ENCODE measurements at regions of chrX and their contacts with region 1.

Region 1: DNA sequence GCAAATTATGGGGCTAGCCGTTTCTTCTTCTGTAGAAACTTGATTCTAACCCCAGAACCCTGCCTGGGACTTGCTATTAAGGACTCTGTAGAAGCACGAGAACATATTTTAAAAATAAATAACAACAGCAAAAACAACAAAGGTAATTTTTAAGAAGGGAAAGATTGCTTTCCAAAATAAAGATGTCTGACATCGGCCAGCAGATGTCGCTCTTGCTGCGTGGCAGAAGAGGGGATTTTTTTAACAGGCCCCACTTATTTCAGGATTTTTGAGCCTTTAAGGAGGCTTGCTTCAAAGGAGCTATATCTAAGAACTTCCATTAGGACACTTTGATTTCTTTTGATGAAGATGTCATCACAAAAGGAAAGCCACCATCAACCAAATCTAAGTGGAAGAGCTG is 62.8 kb upstream of the EGFL6 start:
- DNase-seq: peak; percentile 62
- H3K4me3 ChIP-seq: peak overlapping the region in 1 of 2 experiments; percentile 9; a peak in 1 of 4 replicates
- H3K27ac ChIP-seq: no peak overlapping the region
- H3K4me1 ChIP-seq: no peaks in the 10 kb centered on the region
- H3K27me3 ChIP-seq: no peaks in the 10 kb centered on the region; the same call in 1 of the 2 replicates
- CTCF ChIP-seq: peak; percentile 94
- EP300 ChIP-seq: no peak
- RAD21 ChIP-seq: peak; percentile 92

Region 2: DNA sequence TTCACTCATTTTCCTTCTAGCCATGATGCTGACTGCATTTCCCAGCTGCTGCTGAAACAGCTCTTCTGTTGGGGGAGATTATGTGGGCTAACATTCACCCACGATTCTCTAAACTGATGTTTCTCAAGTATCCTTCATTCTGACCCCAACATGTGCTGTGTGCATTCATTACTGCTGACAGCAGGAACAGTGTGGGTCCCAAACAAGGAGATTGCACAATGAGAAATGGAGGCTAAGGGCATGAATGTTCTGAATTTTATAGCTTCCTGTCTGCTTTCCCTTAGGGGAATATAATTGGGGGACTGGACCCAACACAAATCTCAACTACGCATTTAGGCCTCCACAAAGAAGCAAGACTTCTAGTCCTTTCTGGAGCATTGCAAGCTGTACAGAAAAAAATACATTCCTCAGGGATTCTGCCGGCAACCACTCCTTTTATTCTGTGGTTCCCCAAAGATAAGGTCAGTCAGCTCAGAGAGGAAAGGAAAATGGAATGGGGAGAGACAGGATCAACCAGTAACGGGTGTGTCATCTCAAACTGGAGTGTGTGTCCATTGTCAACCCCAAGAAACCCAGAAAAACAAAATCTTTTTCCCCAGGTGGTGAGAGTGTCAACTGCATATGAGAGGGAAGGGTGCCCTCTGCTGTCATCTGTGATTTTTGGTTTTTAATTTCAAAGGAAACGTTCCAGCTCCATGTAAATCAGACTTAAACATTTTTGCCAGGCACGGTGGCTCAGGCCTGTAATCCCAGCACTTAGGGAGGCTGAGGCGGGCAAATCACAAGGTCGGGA is 18.6 kb before region 1 on chrX:
- CTCF ChIA-PET with region 1: interaction called, 11 read pairs
- POLR2A ChIA-PET with region 1: no interaction called
- DNase-seq: peak; percentile 48
- H3K4me3 ChIP-seq: no peak overlapping the region; a peak in 1 of 4 replicates
- H3K27ac ChIP-seq: peak overlapping the region; percentile 92 to 97
- H3K4me1 ChIP-seq: peaks cover 0 to 11% of the 10 kb centered on the region in 2 experiments; a peak in 3 of 4 replicates
- H3K27me3 ChIP-seq: no peaks in the 10 kb centered on the region
- CTCF ChIP-seq: peak; percentile 78
- EP300 ChIP-seq: peak in 1 of 2 experiments; percentile 34; a peak in 1 of 4 replicates
- RAD21 ChIP-seq: peak; percentile 88

Region 3: GRCh38 chrX:13518126-13518525 is 11.6 kb after region 1 on chrX:
- CTCF ChIA-PET with region 1: interaction called, 11 read pairs
- POLR2A ChIA-PET with region 1: no interaction called
- DNase-seq: no peak
- H3K4me3 ChIP-seq: no peak overlapping the region
- H3K27ac ChIP-seq: no peak overlapping the region
- H3K4me1 ChIP-seq: no peaks in the 10 kb centered on the region
- H3K27me3 ChIP-seq: no peaks in the 10 kb centered on the region; the same call in 1 of the 2 replicates
- CTCF ChIP-seq: no peak
- EP300 ChIP-seq: no peak
- RAD21 ChIP-seq: no peak

Region 4: DNA sequence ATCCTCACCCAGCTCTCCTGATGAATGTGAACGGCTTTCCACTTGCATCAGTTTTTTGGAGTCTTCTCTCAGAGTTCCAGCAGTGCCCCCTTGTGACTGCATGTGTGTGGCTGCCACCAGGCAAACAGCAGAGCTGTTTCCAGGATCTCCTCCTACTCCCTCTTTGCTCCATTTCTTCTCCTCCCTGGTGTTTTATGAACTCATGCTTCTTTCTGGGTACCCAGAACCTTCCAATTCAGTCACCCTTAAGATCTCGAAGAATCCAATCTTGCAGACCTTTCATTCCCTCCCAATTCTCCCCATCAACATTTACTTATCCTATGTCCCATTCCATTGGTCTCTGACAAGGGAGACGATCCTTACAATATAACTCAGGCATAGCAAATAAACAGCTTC is 139.6 kb after region 1 on chrX:
- CTCF ChIA-PET with region 1: interaction called, 46 read pairs
- POLR2A ChIA-PET with region 1: no interaction called
- DNase-seq: peak; percentile 40
- H3K4me3 ChIP-seq: no peak overlapping the region
- H3K27ac ChIP-seq: no peak overlapping the region
- H3K4me1 ChIP-seq: no peaks in the 10 kb centered on the region
- H3K27me3 ChIP-seq: no peaks in the 10 kb centered on the region
- CTCF ChIP-seq: peak; percentile 83
- EP300 ChIP-seq: no peak
- RAD21 ChIP-seq: peak; percentile 73

Region 5: GRCh38 chrX:13653022-13653693 is 146.6 kb after region 1 on chrX and contains the start of gene TCEANC:
- CTCF ChIA-PET with region 1: interaction called, 14 read pairs
- POLR2A ChIA-PET with region 1: no interaction called
- DNase-seq: peak; percentile 94
- H3K4me3 ChIP-seq: peak within 1 kb of the TSS; percentile 74 to 83
- H3K27ac ChIP-seq: peak within 1 kb of the TSS; percentile 91 to 97
- H3K4me1 ChIP-seq: peaks cover 0 to 6% of the 10 kb centered on the region in 2 experiments; a peak in 2 of 4 replicates
- H3K27me3 ChIP-seq: no peaks in the 10 kb centered on the region
- CTCF ChIP-seq: no peak
- EP300 ChIP-seq: no peak
- RAD21 ChIP-seq: no peak
- polyA plus RNA-seq, gene TCEANC: 0.84 and 1.2 TPM in 2 replicates

Measured in SK-N-SH (cell line).